CD4-positive, alpha-beta T cell (primary cell): ENCODE measurements at regions of chr10 and their contacts with region 1.

Region 1: GRCh38 chr10:114295393-114295792 is 56.3 kb downstream of the VWA2 start:
- DNase-seq: no peak
- ATAC-seq: no peak
- H3K4me3 ChIP-seq: no peak overlapping the region
- H3K4me3 Mint-ChIP-seq: no peak overlapping the region
- H3K27ac ChIP-seq: no peak overlapping the region
- H3K27ac Mint-ChIP-seq: no peak overlapping the region
- H3K4me1 ChIP-seq: no peaks in the 10 kb centered on the region
- H3K4me1 Mint-ChIP-seq: no peaks in the 10 kb centered on the region
- H3K27me3 ChIP-seq: no peaks in the 10 kb centered on the region
- H3K27me3 Mint-ChIP-seq: no peaks in the 10 kb centered on the region
- CTCF ChIP-seq: no peak

Region 2: DNA sequence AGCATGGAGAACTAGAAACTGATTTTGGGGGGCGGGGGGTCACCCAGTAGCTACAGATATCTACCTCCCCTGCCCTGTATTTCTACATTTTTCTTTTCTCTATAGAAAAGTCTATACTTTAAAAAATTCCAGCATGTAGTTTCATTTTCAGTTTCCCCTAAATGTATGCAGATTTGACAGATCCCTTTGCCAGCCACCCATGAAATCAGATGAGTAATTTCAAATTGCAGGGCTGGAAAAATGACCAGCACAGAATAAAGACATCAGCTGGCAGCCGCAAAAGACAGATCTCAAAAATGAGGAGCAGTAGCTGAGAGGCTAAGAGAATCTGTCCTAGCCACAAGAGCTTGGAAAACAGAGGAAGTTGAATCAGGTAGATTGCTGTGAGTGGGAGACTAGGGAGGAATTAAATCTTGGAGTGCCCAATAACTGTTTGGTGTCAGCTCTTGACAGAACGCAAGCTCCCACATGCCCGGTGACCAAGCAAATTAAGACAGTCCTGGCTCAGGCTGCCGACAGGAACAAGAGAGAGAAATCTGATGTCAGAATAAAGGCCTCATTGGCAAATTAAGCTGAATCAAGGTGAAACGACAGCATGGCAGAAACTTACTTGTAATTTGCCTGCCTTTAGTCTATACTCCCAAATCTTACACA is 227.2 kb before region 1 on chr10:
- CTCF ChIA-PET with region 1: no interaction called
- POLR2A ChIA-PET with region 1: no interaction called
- intact Hi-C with region 1: no loop called
- DNase-seq: no peak
- ATAC-seq: no peak
- H3K4me3 ChIP-seq: no peak overlapping the region
- H3K4me3 Mint-ChIP-seq: no peak overlapping the region
- H3K27ac ChIP-seq: no peak overlapping the region
- H3K27ac Mint-ChIP-seq: no peak overlapping the region
- H3K4me1 ChIP-seq: peaks cover 8% of the 10 kb centered on the region
- H3K4me1 Mint-ChIP-seq: peaks cover 11% of the 10 kb centered on the region
- H3K27me3 ChIP-seq: no peaks in the 10 kb centered on the region
- H3K27me3 Mint-ChIP-seq: peaks cover 8% of the 10 kb centered on the region
- CTCF ChIP-seq: no peak

Region 3: GRCh38 chr10:114271779-114272167 is 23.6 kb before region 1 on chr10:
- CTCF ChIA-PET with region 1: no interaction called
- POLR2A ChIA-PET with region 1: no interaction called
- intact Hi-C with region 1: no loop called
- DNase-seq: no peak
- ATAC-seq: no peak
- H3K4me3 ChIP-seq: no peak overlapping the region
- H3K4me3 Mint-ChIP-seq: no peak overlapping the region
- H3K27ac ChIP-seq: no peak overlapping the region
- H3K27ac Mint-ChIP-seq: no peak overlapping the region
- H3K4me1 ChIP-seq: no peaks in the 10 kb centered on the region
- H3K4me1 Mint-ChIP-seq: no peaks in the 10 kb centered on the region
- H3K27me3 ChIP-seq: no peaks in the 10 kb centered on the region
- H3K27me3 Mint-ChIP-seq: peaks cover 5% of the 10 kb centered on the region
- CTCF ChIP-seq: no peak

Region 4: GRCh38 chr10:114334301-114334700 is 38.9 kb after region 1 on chr10:
- CTCF ChIA-PET with region 1: no interaction called
- POLR2A ChIA-PET with region 1: no interaction called
- intact Hi-C with region 1: loop called in 1 of 2 experiments (anchors 1 kb)
- DNase-seq: no peak
- ATAC-seq: no peak
- H3K4me3 ChIP-seq: no peak overlapping the region
- H3K4me3 Mint-ChIP-seq: no peak overlapping the region
- H3K27ac ChIP-seq: no peak overlapping the region
- H3K27ac Mint-ChIP-seq: no peak overlapping the region
- H3K4me1 ChIP-seq: no peaks in the 10 kb centered on the region
- H3K4me1 Mint-ChIP-seq: no peaks in the 10 kb centered on the region
- H3K27me3 ChIP-seq: no peaks in the 10 kb centered on the region
- H3K27me3 Mint-ChIP-seq: no peaks in the 10 kb centered on the region
- CTCF ChIP-seq: no peak